Heart right ventricle (tissue), 16 donors: ENCODE measurements at regions of chr9 and their contacts with region 1.

Region 1: GRCh38 chr9:119509291-119509905 is 140.2 kb upstream of the BRINP1 start:
- DNase-seq: no peak
- ATAC-seq: no peak
- H3K4me3 ChIP-seq: no peak overlapping the region
- H3K27ac ChIP-seq: no peak overlapping the region
- H3K4me1 ChIP-seq: no peaks in the 10 kb centered on the region
- H3K27me3 ChIP-seq: no peaks in the 10 kb centered on the region
- CTCF ChIP-seq: no peak

Region 2: DNA sequence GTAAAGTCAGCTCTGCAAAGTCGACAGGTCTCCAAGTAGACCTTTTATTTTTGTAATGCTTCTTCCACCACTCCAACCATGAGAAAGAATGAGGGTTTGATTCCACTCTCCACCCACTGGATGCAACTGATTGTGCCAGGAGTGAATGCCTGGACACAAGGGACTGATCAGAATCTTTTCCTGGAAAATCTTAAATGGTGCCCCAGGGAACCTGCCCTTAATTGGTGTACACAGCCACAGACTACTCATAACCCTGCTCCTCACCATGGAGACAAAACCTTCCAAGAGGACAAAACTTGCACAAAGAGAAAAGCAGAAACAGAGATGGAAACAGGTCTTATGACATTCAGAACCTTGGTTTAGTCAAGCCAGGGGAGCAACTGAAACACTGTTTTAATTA is 68.5 kb after region 1 on chr9:
- intact Hi-C with region 1: loop called in 1 of 10 experiments (anchors 10 kb)
- DNase-seq: no peak
- ATAC-seq: no peak
- H3K4me3 ChIP-seq: no peak overlapping the region
- H3K27ac ChIP-seq: no peak overlapping the region
- H3K4me1 ChIP-seq: no peaks in the 10 kb centered on the region
- H3K27me3 ChIP-seq: peaks cover 0 to 3% (median 0%) of the 10 kb centered on the region in 7 donors
- CTCF ChIP-seq: no peak